ENCODE measurements at regions of chr1 and their contacts with region 1.

Region 1: DNA sequence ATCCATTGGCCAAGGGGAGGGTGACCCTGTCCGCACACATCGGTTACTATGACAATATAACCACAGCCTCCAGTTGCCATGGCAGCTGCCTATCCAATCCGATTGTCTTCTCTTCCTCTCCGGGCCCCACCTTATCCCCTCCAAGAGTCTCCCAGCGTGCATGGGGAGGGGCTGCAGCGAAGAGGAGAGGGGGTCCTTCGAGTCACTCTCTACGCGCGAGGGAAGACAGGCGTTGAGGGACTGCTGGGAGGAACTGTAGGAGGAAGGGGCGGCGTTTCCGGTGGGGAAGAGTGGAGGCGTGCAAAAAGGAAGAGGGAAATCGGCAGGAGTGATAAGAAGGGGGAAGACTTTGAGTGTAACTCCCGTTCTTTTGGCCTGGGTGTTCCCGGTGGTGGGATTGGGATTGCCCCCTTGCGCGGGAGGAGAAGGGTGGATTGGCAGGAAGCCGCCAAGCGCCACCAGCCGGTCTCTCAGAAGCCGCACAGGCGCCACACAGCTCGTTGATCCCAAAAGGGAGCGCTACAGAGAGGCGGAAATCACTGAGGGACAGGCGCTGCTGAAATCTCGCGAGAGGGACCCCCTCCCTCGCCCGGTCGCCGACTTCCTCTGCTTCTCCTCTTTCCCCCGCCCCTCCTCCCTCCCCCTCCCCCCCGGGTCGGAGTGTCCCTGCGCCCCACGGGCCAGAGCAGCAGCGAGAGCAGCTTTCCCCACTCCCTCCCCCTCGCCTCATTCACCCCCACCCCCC is 384 bp upstream of the SMG7 start:
- DNase-seq: peak; percentile 98
- H3K4me3 Mint-ChIP-seq: peak overlapping the region; percentile 81
- H3K27ac Mint-ChIP-seq: peak overlapping the region; percentile 99
- H3K4me1 Mint-ChIP-seq: peaks cover 24% of the 10 kb centered on the region
- H3K27me3 Mint-ChIP-seq: no peaks in the 10 kb centered on the region

Region 2: DNA sequence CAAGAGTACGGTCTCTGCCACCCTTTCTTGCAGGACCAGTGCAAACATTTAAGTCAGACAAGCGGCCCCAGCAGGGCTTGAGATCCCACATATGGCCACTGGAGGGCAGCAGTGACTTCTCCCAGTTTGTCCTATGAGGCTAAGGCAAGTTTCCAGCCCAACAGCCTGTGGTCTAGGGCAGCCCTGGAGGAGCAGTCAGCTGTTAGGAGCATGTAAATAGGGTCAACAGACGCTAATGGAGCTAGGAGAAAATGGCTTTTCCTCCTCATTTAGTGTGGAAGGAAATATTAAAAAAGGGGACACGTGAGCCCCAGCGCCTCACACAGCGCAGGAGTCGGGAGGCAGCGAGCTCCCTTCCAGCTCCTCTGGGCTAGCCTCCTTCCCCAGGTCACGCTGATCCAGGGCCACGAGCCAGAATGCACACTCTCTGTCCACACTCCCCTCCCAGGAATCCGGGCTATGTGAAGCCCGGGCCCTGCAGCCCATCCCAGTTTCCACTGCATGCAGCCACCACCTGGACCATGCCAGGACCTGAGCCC is 190.3 kb before region 1 on chr1:
- CTCF ChIA-PET with region 1: interaction called, 3 read pairs
- intact Hi-C with region 1: loop called (anchors 2 kb)
- DNase-seq: peak; percentile 88
- H3K4me3 Mint-ChIP-seq: no peak overlapping the region
- H3K27ac Mint-ChIP-seq: no peak overlapping the region
- H3K4me1 Mint-ChIP-seq: no peaks in the 10 kb centered on the region
- H3K27me3 Mint-ChIP-seq: no peaks in the 10 kb centered on the region

Region 3: GRCh38 chr1:183622884-183623785 is 151.2 kb after region 1 on chr1:
- CTCF ChIA-PET with region 1: interaction called, 4 read pairs
- intact Hi-C with region 1: loop called (anchors 1 kb)
- DNase-seq: peak; percentile 78
- H3K4me3 Mint-ChIP-seq: no peak overlapping the region
- H3K27ac Mint-ChIP-seq: peak overlapping the region; percentile 37
- H3K4me1 Mint-ChIP-seq: peaks cover 14% of the 10 kb centered on the region
- H3K27me3 Mint-ChIP-seq: no peaks in the 10 kb centered on the region

Region 4: DNA sequence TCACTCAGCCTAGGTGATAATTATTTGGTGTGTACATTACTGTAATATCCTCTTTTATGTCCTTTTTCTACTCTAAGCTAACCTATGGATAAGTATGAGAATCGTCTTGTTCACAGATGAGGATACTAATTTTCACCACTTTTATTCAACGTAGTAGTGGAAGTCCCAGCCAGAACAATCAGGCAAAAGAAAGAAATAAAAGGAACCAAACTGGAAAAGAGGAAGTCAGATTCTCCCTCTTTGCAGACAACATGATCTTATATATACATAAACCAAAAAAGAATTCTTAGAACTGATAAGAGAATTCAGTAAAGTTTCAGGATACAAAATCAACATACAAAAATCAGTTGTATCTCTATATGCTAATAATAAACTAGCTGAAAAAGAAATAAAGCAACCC is 320.4 kb after region 1 on chr1:
- CTCF ChIA-PET with region 1: no interaction called
- intact Hi-C with region 1: no loop called
- DNase-seq: no peak
- H3K4me3 Mint-ChIP-seq: no peak overlapping the region
- H3K27ac Mint-ChIP-seq: no peak overlapping the region
- H3K4me1 Mint-ChIP-seq: no peaks in the 10 kb centered on the region
- H3K27me3 Mint-ChIP-seq: no peaks in the 10 kb centered on the region

Region 5: GRCh38 chr1:183841950-183842794 is 370.3 kb after region 1 on chr1:
- CTCF ChIA-PET with region 1: no interaction called
- intact Hi-C with region 1: loop called (anchors 1 kb)
- DNase-seq: peak; percentile 58
- H3K4me3 Mint-ChIP-seq: peak overlapping the region; percentile 56
- H3K27ac Mint-ChIP-seq: peak overlapping the region; percentile 88
- H3K4me1 Mint-ChIP-seq: peaks cover 28% of the 10 kb centered on the region
- H3K27me3 Mint-ChIP-seq: no peaks in the 10 kb centered on the region

Region 6: GRCh38 chr1:184051485-184052193 is 579.7 kb after region 1 on chr1 and contains the start of gene TSEN15:
- CTCF ChIA-PET with region 1: no interaction called
- intact Hi-C with region 1: loop called (anchors 2 kb)
- DNase-seq: peak; percentile 84
- H3K4me3 Mint-ChIP-seq: peak within 1 kb of the TSS; percentile 96
- H3K27ac Mint-ChIP-seq: peak within 1 kb of the TSS; percentile 96
- H3K4me1 Mint-ChIP-seq: peaks cover 34% of the 10 kb centered on the region
- H3K27me3 Mint-ChIP-seq: peaks cover 5% of the 10 kb centered on the region
- total RNA-seq, gene TSEN15: 52.6 to 57.6 TPM

Measured in activated naive CD4-positive, alpha-beta T cell treated with anti-CD3 and anti-CD28 coated beads for 36 hours (primary cell).